Activated CD4-positive, alpha-beta memory T cell treated with anti-CD3 and anti-CD28 coated beads for 36 hours (primary cell): ENCODE measurements at regions of chr9 and their contacts with region 1.

Region 1: DNA sequence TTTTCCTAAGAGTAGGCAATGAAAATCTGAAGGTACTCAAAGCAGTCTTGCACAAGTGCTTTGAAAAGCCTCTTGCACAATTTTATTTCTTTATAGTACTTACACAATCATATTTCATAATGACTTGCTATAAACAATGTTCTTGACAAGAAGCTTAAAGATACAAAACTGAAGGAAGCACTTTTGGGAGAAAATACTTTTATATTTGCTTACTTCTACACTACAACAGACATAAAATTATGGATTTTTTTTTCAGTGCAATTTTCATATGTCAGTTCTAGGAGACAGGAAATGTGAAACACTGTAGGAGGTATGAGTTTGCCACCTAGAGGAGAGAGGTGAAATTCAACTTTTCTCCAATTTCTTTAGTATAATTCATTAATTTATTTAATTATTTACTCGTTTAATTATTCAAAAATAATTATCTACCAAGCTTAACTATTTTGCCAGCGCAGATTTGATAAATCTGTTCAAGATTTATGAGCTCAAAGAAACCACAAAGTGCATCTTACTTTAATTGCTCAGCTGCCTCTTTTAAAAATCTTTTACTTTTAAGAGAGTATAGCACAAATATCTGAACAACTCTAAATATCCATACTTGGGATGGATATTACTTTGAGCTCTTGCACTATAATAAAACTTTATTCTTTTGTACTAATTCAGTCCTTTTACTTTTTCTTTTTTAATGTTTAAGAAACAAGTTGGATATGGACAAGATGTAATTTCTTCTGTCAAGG is 29.0 kb upstream of the CDKN2B start:
- DNase-seq: no peak
- H3K4me3 Mint-ChIP-seq: no peak overlapping the region
- H3K27ac Mint-ChIP-seq: no peak overlapping the region
- H3K4me1 Mint-ChIP-seq: peaks cover 16% of the 10 kb centered on the region
- H3K27me3 Mint-ChIP-seq: peaks cover 7% of the 10 kb centered on the region

Region 2: DNA sequence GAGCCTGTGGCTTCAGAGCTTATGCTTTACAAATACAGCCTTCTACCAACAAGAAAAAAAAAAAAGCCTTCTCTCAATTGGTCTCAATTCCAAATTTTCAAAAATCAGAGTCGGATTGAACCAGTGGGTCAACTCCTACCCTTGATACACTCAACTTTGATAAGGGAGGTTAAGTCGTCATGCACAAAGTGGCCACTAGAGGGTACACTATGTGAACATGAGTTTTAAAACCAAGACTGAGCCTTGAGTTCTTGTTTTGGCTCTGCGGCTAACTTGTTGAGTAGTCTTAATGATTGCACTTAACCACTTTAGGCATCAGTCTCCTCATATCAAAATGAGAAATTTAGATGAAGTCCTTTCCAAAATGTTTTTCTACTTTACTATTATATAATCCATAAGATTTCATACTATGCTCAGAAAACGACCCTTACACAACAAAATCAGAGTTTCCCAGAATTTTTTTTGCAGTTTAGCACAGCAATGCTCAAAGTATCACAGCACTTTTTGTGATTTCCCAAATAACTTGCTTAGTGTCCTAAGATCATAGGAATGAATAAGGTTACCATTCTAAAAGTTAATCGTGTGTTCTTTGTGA is 328.6 kb before region 1 on chr9:
- CTCF ChIA-PET with region 1: interaction called, 5 read pairs
- POLR2A ChIA-PET with region 1: no interaction called
- intact Hi-C with region 1: loop called (anchors 5 kb)
- DNase-seq: peak; percentile 65
- H3K4me3 Mint-ChIP-seq: no peak overlapping the region
- H3K27ac Mint-ChIP-seq: no peak overlapping the region
- H3K4me1 Mint-ChIP-seq: peaks cover 7% of the 10 kb centered on the region
- H3K27me3 Mint-ChIP-seq: no peaks in the 10 kb centered on the region

Region 3: GRCh38 chr9:21995177-21996086 is 42.7 kb before region 1 on chr9:
- CTCF ChIA-PET with region 1: interaction called, 5 read pairs
- POLR2A ChIA-PET with region 1: no interaction called
- intact Hi-C with region 1: loop called (anchors 5 kb)
- DNase-seq: peak; percentile 87
- H3K4me3 Mint-ChIP-seq: peak overlapping the region; percentile 86
- H3K27ac Mint-ChIP-seq: peak overlapping the region; percentile 44
- H3K4me1 Mint-ChIP-seq: peaks cover 11% of the 10 kb centered on the region
- H3K27me3 Mint-ChIP-seq: peaks cover 16% of the 10 kb centered on the region

Region 4: GRCh38 chr9:22052376-22052945 is 14.3 kb after region 1 on chr9:
- CTCF ChIA-PET with region 1: interaction called, 13 read pairs
- POLR2A ChIA-PET with region 1: no interaction called
- intact Hi-C with region 1: no loop called
- DNase-seq: peak; percentile 50
- H3K4me3 Mint-ChIP-seq: no peak overlapping the region
- H3K27ac Mint-ChIP-seq: no peak overlapping the region
- H3K4me1 Mint-ChIP-seq: peaks cover 26% of the 10 kb centered on the region
- H3K27me3 Mint-ChIP-seq: peaks cover 12% of the 10 kb centered on the region

Region 5: DNA sequence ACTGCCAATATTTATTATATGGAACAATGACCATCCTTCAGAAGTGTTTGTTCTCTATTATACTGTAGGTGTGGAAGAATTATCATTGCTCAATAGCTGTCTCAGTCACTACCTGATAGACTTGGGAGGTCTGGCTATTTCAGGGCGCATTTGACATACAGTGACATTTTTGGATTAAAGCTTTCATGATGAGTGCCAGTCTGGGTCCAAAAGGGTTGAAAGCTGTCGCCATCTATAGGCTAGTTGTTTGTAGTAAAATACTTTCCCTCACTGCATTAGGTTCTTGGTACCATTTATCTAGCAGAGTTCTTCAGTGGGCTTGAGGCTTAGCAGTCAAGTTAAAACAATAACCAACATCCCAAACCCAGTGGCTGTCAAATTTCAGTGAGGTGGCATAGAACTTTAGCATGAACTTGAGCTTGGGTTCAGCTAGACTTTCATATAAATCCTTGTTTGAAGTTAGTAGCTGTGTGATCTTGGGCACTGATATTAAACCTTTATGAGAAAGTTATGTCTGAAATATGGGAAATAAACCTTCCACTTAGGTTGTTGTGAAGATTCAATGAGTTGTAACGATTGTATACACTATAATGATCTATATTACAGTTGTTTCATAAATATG is 81.5 kb after region 1 on chr9:
- CTCF ChIA-PET with region 1: interaction called, 14 read pairs
- POLR2A ChIA-PET with region 1: no interaction called
- intact Hi-C with region 1: loop called (anchors 2 kb)
- DNase-seq: peak; percentile 15
- H3K4me3 Mint-ChIP-seq: no peak overlapping the region
- H3K27ac Mint-ChIP-seq: no peak overlapping the region
- H3K4me1 Mint-ChIP-seq: no peaks in the 10 kb centered on the region
- H3K27me3 Mint-ChIP-seq: peaks cover 21% of the 10 kb centered on the region

Region 6: GRCh38 chr9:22238809-22239684 is 200.9 kb after region 1 on chr9:
- CTCF ChIA-PET with region 1: interaction called, 18 read pairs
- POLR2A ChIA-PET with region 1: no interaction called
- intact Hi-C with region 1: loop called (anchors 5 kb)
- DNase-seq: no peak
- H3K4me3 Mint-ChIP-seq: no peak overlapping the region
- H3K27ac Mint-ChIP-seq: no peak overlapping the region
- H3K4me1 Mint-ChIP-seq: peaks cover 35% of the 10 kb centered on the region
- H3K27me3 Mint-ChIP-seq: peaks cover 12% of the 10 kb centered on the region

Region 7: GRCh38 chr9:22657713-22658112 is 619.6 kb after region 1 on chr9:
- CTCF ChIA-PET with region 1: no interaction called
- POLR2A ChIA-PET with region 1: no interaction called
- intact Hi-C with region 1: no loop called
- DNase-seq: no peak
- H3K4me3 Mint-ChIP-seq: no peak overlapping the region
- H3K27ac Mint-ChIP-seq: no peak overlapping the region
- H3K4me1 Mint-ChIP-seq: no peaks in the 10 kb centered on the region
- H3K27me3 Mint-ChIP-seq: no peaks in the 10 kb centered on the region